CD8-positive, alpha-beta memory T cell (primary cell): ENCODE measurements at regions of chr14 and their contacts with region 1.

Region 1: GRCh38 chr14:55160989-55161388 is 30.4 kb downstream of the DLGAP5 start:
- DNase-seq: peak in 2 of 5 donors; percentile 32 to 35
- H3K4me3 ChIP-seq: no peak overlapping the region
- H3K4me3 Mint-ChIP-seq: no peak overlapping the region
- H3K27ac ChIP-seq: no peak overlapping the region
- H3K27ac Mint-ChIP-seq: peak overlapping the region in 2 of 8 donors; percentile 2 to 33
- H3K4me1 ChIP-seq: no peaks in the 10 kb centered on the region
- H3K4me1 Mint-ChIP-seq: peaks cover 7 to 39% (median 21%) of the 10 kb centered on the region in 3 donors
- H3K27me3 ChIP-seq: no peaks in the 10 kb centered on the region
- H3K27me3 Mint-ChIP-seq: no peaks in the 10 kb centered on the region

Region 2: DNA sequence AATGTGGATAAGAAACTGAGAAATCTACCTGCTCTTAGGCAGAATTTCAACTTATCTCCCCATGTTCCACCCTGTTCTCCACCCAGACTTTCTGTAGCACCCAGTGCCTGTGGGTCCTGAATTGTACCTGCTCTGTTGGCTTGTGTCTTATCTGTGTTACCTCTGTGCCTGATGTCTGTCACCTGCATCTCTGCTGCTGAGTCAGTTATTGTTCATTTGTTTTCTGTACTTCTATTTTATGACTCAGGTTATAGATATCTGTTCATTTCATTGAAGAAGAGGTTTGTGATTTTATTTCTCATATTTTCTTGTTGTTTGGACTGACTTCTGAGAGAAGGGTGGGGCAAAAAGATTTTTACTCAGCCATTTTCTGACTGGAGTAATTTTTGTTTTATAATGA is 122.3 kb before region 1 on chr14:
- CTCF ChIA-PET with region 1: no interaction called
- POLR2A ChIA-PET with region 1: no interaction called
- DNase-seq: no peak
- H3K4me3 ChIP-seq: no peak overlapping the region
- H3K4me3 Mint-ChIP-seq: no peak overlapping the region
- H3K27ac ChIP-seq: no peak overlapping the region
- H3K27ac Mint-ChIP-seq: peak overlapping the region in 3 of 8 donors; percentile 20 to 72 (median 45)
- H3K4me1 ChIP-seq: no peaks in the 10 kb centered on the region
- H3K4me1 Mint-ChIP-seq: peaks cover 9 to 17% (median 10%) of the 10 kb centered on the region in 3 donors
- H3K27me3 ChIP-seq: no peaks in the 10 kb centered on the region
- H3K27me3 Mint-ChIP-seq: no peaks in the 10 kb centered on the region

Region 3: DNA sequence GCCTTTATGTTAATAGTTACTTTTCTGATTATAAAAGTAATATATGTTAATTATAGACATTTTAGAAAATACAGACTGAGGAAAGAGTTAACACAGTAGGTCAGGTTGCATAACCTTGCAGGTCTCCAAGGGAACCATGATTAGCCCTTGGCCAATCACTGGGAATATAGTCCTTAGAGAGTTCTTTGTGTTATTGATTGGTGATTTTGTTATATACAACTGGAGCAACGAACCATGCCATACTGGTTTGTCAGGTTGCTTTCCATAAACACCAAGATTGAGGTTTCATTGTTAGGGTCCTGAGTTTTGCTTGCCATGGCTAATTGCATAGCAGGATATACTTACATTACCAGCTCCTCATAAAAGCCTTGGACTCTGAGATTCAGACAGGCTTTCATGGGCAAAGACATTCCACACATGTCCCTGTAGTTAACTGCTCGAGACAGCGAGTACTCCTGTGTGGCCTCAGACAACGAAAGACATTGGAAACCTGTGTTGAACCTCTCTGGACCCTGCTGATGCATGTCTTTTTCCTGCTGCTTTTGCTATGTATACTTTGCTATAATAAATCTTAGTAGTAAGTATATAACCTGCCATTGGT is 75.8 kb before region 1 on chr14:
- CTCF ChIA-PET with region 1: interaction called, 143 read pairs
- POLR2A ChIA-PET with region 1: interaction called, 10 read pairs
- DNase-seq: no peak
- H3K4me3 ChIP-seq: no peak overlapping the region
- H3K4me3 Mint-ChIP-seq: no peak overlapping the region
- H3K27ac ChIP-seq: no peak overlapping the region
- H3K27ac Mint-ChIP-seq: no peak overlapping the region
- H3K4me1 ChIP-seq: no peaks in the 10 kb centered on the region
- H3K4me1 Mint-ChIP-seq: peaks cover 3 to 6% (median 4%) of the 10 kb centered on the region in 3 donors
- H3K27me3 ChIP-seq: no peaks in the 10 kb centered on the region
- H3K27me3 Mint-ChIP-seq: peaks cover 0 to 1% of the 10 kb centered on the region in 2 donors

Region 4: DNA sequence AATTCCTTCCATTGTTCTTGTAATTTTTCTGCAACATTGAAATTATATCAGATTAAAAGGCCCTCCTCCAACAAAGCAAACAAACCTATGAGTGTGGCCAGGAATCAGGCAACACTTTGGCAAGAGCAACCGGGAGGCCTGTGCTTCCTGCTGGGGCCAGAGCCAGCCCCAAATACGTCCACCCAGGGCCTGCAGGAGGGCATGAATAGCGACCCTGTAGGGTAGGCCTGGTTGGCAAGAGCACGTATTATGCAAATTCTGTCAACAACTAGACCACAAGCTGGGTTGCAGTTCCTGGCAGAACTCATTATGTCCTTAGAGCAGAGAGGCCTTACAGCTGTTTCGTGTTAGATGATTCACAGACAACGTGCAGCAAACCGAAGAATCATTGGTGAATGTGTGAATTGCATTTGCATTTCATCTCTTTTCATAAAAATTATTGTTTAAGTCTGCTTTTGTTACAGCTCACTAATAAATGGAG is 58.8 kb before region 1 on chr14:
- CTCF ChIA-PET with region 1: interaction called, 23 read pairs
- POLR2A ChIA-PET with region 1: interaction called, 4 read pairs
- DNase-seq: peak; percentile 19 to 78 (median 36)
- H3K4me3 ChIP-seq: no peak overlapping the region
- H3K4me3 Mint-ChIP-seq: peak overlapping the region; percentile 41 to 89 (median 72)
- H3K27ac ChIP-seq: peak overlapping the region; percentile 68
- H3K27ac Mint-ChIP-seq: peak overlapping the region; percentile 92 to 99 (median 98)
- H3K4me1 ChIP-seq: peaks cover 44% of the 10 kb centered on the region
- H3K4me1 Mint-ChIP-seq: peaks cover 58 to 72% (median 59%) of the 10 kb centered on the region in 3 donors
- H3K27me3 ChIP-seq: no peaks in the 10 kb centered on the region
- H3K27me3 Mint-ChIP-seq: no peaks in the 10 kb centered on the region

Region 5: GRCh38 chr14:55146425-55146824 is 14.6 kb before region 1 on chr14:
- CTCF ChIA-PET with region 1: interaction called, 11 read pairs
- POLR2A ChIA-PET with region 1: no interaction called
- DNase-seq: no peak
- H3K4me3 ChIP-seq: no peak overlapping the region
- H3K4me3 Mint-ChIP-seq: no peak overlapping the region
- H3K27ac ChIP-seq: no peak overlapping the region
- H3K27ac Mint-ChIP-seq: peak overlapping the region in 1 of 8 donors; percentile 64
- H3K4me1 ChIP-seq: no peaks in the 10 kb centered on the region
- H3K4me1 Mint-ChIP-seq: peaks cover 0 to 10% (median 9%) of the 10 kb centered on the region in 3 donors
- H3K27me3 ChIP-seq: no peaks in the 10 kb centered on the region
- H3K27me3 Mint-ChIP-seq: no peaks in the 10 kb centered on the region